GM12878 (cell line): ENCODE measurements at regions of chr15 and their contacts with region 1.

Region 1: GRCh38 chr15:54618120-54618519 is 578.6 kb downstream of the RSL24D1 start:
- DNase-seq: no peak
- ATAC-seq: peak; percentile 14; the same call in 2 of the 3 replicates
- H3K4me3 ChIP-seq: no peak overlapping the region
- H3K27ac ChIP-seq: no peak overlapping the region
- H3K4me1 ChIP-seq: no peaks in the 10 kb centered on the region
- H3K27me3 ChIP-seq: no peaks in the 10 kb centered on the region
- CTCF ChIP-seq: no peak
- EP300 ChIP-seq: no peak
- POLR2A ChIP-seq: no peak
- RAD21 ChIP-seq: no peak

Region 2: DNA sequence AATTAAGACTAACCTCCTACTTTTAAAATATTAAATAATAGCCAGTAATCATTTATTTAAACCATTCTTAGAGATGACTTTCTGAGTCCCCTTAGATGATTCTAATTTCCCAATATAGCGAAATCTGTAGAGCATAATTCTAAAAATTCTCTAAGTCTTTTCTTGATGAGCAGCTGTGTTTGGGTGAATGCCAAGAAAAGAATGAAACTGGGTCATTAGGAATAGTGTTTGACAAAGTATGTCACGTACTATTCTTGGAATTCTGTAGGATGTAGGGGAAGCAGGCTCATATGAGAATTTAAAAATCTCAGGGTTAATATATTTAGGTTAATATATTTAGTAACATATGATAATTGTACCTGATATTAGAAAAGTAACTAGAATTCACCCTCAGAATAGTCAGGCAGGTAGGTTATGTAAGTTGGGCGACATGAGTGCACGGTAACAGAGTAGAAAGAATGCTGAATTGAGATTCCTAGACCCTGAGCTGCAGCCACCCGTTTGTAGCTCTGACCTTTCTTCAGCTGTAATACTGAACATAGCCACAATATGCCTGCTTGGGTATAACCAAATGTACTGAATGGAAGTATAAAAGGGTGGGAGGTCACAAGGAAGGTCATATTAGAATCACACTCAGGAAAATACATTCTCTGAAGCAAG is 115.6 kb before region 1 on chr15:
- CTCF ChIA-PET with region 1: interaction called, 3 read pairs
- POLR2A ChIA-PET with region 1: no interaction called
- RAD21 ChIA-PET with region 1: interaction called, 5 read pairs
- SMC1A ChIA-PET with region 1: interaction called, 10 read pairs
- in situ Hi-C with region 1: no loop called
- intact Hi-C with region 1: no loop called
- DNase-seq: no peak
- ATAC-seq: peak; percentile 44
- H3K4me3 ChIP-seq: no peak overlapping the region
- H3K27ac ChIP-seq: no peak overlapping the region
- H3K4me1 ChIP-seq: no peaks in the 10 kb centered on the region
- H3K27me3 ChIP-seq: no peaks in the 10 kb centered on the region
- CTCF ChIP-seq: no peak
- EP300 ChIP-seq: no peak
- POLR2A ChIP-seq: no peak
- RAD21 ChIP-seq: no peak

Region 3: DNA sequence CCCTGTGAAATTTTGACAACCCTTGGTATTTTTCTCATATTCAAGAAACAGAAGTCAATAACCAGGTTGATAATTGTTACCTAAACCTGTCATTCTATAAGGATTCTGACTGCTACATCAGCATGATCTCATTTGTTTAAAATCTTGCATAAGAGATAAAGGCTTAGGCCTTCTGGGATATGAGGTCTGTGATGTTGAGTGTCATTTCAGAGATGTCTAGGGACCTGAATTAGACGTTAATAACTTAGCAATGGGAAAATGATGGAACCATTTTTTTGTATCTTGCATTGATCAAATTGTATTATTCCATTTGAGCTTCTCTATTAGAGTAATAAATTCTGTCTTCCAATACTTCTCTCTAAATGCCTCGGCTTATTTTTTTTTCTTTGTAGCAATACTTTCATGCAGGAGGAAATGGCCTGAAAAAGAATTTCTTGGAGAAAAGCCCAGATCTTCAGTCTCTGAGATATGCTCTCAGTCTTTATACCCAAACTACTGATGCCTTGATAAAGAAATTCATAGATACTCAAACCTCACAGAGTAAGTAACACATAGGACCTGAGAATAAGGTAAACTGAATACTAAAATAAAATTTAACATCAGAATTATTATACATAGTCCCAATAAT is 50.6 kb before region 1 on chr15:
- CTCF ChIA-PET with region 1: no interaction called
- POLR2A ChIA-PET with region 1: no interaction called
- RAD21 ChIA-PET with region 1: no interaction called
- SMC1A ChIA-PET with region 1: no interaction called
- in situ Hi-C with region 1: no loop called
- intact Hi-C with region 1: no loop called
- DNase-seq: no peak
- ATAC-seq: no peak
- H3K4me3 ChIP-seq: no peak overlapping the region
- H3K27ac ChIP-seq: no peak overlapping the region
- H3K4me1 ChIP-seq: no peaks in the 10 kb centered on the region
- H3K27me3 ChIP-seq: no peaks in the 10 kb centered on the region
- CTCF ChIP-seq: no peak
- EP300 ChIP-seq: no peak
- POLR2A ChIP-seq: no peak
- RAD21 ChIP-seq: no peak

Region 4: DNA sequence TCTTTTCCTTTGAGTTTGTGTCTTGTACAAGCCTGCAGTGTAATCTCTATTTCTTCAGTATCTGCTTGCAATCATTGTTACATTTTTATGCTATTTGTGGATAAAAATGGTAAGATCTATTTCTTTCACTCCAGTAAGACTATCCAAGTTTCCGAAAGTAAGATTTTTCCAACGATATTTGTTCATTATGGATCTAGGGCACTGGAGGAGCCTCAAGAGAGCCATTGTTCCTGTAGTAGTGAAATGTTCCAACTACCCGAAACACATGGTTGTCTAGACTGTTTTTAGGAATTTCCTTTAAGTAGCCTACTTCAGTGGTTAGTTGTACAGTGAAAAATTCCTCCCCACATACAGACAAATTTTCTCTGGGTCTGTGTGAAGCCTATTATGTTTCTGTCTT is 18.7 kb before region 1 on chr15:
- CTCF ChIA-PET with region 1: interaction called, 12 read pairs
- POLR2A ChIA-PET with region 1: interaction called, 11 read pairs
- RAD21 ChIA-PET with region 1: interaction called, 7 read pairs
- SMC1A ChIA-PET with region 1: interaction called, 75 read pairs
- in situ Hi-C with region 1: no loop called
- intact Hi-C with region 1: no loop called
- DNase-seq: no peak
- ATAC-seq: no peak
- H3K4me3 ChIP-seq: no peak overlapping the region
- H3K27ac ChIP-seq: no peak overlapping the region
- H3K4me1 ChIP-seq: no peaks in the 10 kb centered on the region
- H3K27me3 ChIP-seq: no peaks in the 10 kb centered on the region
- CTCF ChIP-seq: no peak
- EP300 ChIP-seq: no peak
- POLR2A ChIP-seq: no peak
- RAD21 ChIP-seq: no peak

Region 5: DNA sequence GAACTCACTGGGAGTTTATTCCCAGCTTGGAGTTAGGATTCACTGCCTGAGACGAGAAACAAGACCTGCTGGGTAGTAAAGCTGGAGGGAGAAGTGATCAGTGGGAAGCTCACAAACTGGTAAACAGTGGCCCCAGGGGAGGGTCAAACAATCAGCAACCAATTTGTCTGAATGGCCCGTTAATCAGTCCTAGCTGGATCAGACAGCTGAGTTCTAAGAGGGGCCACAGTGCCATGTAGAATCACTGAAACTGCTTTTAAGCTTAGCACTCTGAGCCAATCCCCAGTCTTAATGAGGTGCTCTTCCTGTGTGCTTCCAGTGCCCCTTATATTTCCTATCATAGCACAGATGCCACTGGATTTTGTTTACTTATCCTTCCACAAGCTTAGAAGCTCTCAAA is 13.1 kb before region 1 on chr15:
- CTCF ChIA-PET with region 1: interaction called, 12 read pairs
- POLR2A ChIA-PET with region 1: interaction called, 11 read pairs
- RAD21 ChIA-PET with region 1: interaction called, 7 read pairs
- SMC1A ChIA-PET with region 1: interaction called, 75 read pairs
- in situ Hi-C with region 1: no loop called
- intact Hi-C with region 1: no loop called
- DNase-seq: no peak
- ATAC-seq: no peak; the same call in 2 of the 3 replicates
- H3K4me3 ChIP-seq: no peak overlapping the region
- H3K27ac ChIP-seq: no peak overlapping the region
- H3K4me1 ChIP-seq: no peaks in the 10 kb centered on the region
- H3K27me3 ChIP-seq: no peaks in the 10 kb centered on the region
- CTCF ChIP-seq: no peak
- EP300 ChIP-seq: no peak
- POLR2A ChIP-seq: no peak
- RAD21 ChIP-seq: no peak

Region 6: DNA sequence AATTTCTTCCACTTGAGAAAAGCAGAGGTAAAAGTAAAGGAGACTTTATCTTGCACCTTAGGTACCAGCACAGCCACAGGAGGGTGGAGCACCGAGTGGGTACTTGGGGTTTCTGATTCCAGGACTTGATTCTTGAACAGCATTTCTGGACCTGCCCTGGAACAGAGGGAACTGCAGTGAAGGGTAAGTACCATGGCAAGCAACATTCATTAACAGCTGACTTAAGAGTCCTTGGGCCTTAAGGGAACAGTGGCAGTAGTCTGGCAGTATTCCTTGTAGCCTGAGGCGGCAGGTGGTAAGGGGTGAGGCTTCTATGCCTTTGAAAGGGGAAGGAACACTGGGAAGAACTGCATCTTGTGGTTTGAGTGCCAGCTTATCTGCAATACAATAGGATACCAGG is 26.7 kb after region 1 on chr15:
- CTCF ChIA-PET with region 1: no interaction called
- POLR2A ChIA-PET with region 1: no interaction called
- RAD21 ChIA-PET with region 1: no interaction called
- SMC1A ChIA-PET with region 1: no interaction called
- in situ Hi-C with region 1: no loop called
- intact Hi-C with region 1: no loop called
- DNase-seq: no peak
- ATAC-seq: no peak
- H3K4me3 ChIP-seq: no peak overlapping the region
- H3K27ac ChIP-seq: no peak overlapping the region
- H3K4me1 ChIP-seq: no peaks in the 10 kb centered on the region
- H3K27me3 ChIP-seq: no peaks in the 10 kb centered on the region
- CTCF ChIP-seq: no peak
- EP300 ChIP-seq: no peak
- POLR2A ChIP-seq: no peak
- RAD21 ChIP-seq: no peak

Region 7: DNA sequence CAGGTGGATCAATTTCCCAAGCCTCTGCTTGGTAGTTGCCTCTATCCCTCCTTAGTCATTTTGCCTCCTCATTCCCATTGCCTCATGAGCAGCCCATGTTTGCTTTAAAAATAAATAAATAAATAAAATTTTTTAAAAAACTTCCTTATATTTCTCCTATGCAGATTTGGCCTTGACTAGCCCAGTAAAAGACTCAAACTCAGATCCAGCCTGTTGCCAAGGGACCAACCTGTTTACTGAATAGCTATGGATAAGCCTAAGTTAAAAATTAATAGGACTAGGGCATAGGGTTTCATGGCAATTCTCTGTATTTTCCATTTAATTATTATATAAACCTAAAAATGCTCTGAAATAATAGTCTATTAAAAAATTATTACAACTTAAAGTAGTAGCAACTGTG is 194.3 kb after region 1 on chr15:
- CTCF ChIA-PET with region 1: no interaction called
- POLR2A ChIA-PET with region 1: no interaction called
- RAD21 ChIA-PET with region 1: no interaction called
- SMC1A ChIA-PET with region 1: no interaction called
- in situ Hi-C with region 1: no loop called
- intact Hi-C with region 1: no loop called
- DNase-seq: no peak
- ATAC-seq: no peak
- H3K4me3 ChIP-seq: no peak overlapping the region
- H3K27ac ChIP-seq: no peak overlapping the region
- H3K4me1 ChIP-seq: no peaks in the 10 kb centered on the region
- H3K27me3 ChIP-seq: no peaks in the 10 kb centered on the region
- CTCF ChIP-seq: no peak
- EP300 ChIP-seq: no peak
- POLR2A ChIP-seq: no peak
- RAD21 ChIP-seq: no peak